Left ventricle myocardium superior (tissue), 1 donor: ENCODE measurements at regions of chr3 and their contacts with region 1.

Region 1: DNA sequence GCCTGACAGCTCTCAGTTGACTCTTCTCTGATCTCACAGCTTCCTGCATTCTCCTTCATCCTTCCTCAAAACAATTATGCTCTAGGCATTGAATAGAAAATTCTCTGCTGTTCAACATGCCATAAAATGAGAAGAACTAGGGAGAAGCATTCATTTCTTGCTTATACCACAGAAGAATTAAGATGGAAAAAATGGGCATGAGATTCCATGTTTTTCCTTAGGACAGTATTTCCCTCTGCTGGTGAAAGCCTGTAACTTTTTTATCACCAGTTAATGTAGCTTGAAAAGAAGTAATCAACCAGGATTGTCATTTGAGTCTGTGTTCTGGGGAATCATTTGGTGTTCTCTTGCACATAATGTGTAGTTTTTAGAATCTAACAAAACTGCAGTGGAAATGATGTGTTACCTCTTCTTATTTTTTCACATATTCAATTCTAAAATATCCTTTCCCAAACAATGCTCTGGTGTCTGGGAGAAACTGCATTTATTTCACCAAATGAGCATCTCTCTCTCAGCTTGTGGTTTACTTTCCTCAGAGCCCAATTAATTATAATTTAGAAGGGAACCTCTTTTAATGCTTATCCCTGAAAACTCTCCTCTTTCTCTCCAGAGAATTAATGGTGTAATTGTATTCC is 92.8 kb upstream of the DCBLD2 start:
- DNase-seq: no peak
- ATAC-seq: no peak

Region 2: DNA sequence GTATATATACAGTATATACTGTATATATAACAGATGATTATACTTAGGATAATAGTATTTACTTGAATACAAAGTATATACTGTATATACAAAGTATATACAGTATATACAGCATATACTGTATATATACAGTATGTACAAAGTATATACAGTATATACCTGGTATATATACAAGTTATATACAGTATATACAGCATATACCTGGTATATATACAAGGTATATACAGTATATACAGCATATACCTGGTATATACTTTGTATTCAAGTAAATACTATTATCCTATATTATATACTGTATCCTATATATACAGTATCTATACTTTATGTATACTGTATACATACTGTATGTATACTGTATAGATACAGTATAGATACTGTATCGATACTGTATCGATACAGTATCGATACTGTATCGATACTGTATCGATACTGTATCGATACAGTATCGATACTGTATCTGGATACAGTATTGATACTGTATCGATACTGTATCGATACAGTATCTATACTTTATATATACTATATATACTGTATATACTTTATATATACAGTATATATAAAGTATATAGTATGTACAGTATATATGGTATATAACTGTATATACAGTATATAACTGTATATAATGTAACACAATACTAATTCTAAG is 386.1 kb before region 1 on chr3:
- intact Hi-C with region 1: loop called (anchors 5 kb)
- DNase-seq: no peak
- ATAC-seq: no peak

Region 3: GRCh38 chr3:98901392-98902350 is 92.6 kb before region 1 on chr3 and contains the start of gene DCBLD2:
- intact Hi-C with region 1: loop called (anchors 10 kb)
- DNase-seq: peak; percentile 98
- ATAC-seq: peak; percentile 98
- total RNA-seq, gene DCBLD2: 43.1 TPM